ENCODE measurements at regions of chr19 and their contacts with region 1.

Region 1: DNA sequence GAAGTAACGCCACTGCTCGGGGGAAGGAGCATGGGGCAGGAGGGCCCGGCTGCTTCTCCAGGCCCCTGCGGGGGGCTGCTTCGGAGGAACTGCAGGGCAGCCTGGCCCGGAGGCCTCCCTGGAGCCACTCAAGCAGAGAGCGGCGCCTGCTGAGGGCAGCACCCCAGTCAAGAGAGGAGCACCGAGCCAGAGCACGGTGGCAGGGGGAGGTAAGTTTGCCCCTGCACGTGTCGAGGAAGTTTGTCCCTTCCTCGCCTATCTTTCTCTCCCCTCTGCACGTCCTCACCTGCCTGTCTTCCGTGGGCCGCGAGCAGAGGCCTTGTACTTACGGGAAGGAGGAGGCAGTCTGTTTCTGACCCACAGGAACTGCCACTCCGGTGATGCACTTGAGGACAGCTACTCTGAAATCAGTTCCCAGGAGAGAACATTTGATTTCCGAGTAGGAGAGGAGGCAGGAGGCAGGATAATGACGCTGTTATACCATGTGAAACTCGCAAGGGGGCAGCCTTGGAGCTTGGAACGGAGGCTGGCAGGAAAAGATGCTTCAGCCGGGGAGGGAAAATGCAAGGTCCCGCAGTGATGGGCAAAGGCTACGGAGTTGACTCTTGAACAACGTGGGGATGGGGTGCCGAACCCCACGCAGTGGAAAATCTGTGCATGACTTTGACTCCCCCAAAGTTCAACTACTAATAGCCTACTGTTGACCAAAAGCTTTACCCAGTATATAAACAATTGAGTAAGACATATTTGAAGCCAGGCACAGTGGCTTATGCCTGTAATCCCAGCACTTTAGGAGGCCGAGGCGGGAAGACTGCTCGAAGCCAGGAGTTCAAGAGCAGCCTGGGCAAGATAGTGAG is 5.0 kb downstream of the FFAR1 start:
- DNase-seq: peak; percentile 73
- ATAC-seq: peak; percentile 54
- H3K4me3 ChIP-seq: no peak overlapping the region
- H3K27ac ChIP-seq: no peak overlapping the region; the same call in 1 of the 2 replicates
- H3K4me1 ChIP-seq: peaks cover 44% of the 10 kb centered on the region
- H3K27me3 ChIP-seq: no peaks in the 10 kb centered on the region
- CTCF ChIP-seq: peak; percentile 82 to 95 (median 86); a peak in 5 of 6 replicates
- EP300 ChIP-seq: no peak
- POLR2A ChIP-seq: peak; percentile 33; the same call in 1 of the 2 replicates
- RAD21 ChIP-seq: peak; percentile 100

Region 2: GRCh38 chr19:35318650-35319448 is 33.8 kb before region 1 on chr19:
- CTCF ChIA-PET with region 1: interaction called, 10 read pairs
- POLR2A ChIA-PET with region 1: interaction called, 30 read pairs
- RAD21 ChIA-PET with region 1: interaction called, 15 read pairs
- SMC1A ChIA-PET with region 1: interaction called, 19 read pairs
- in situ Hi-C with region 1: no loop called
- intact Hi-C with region 1: no loop called
- DNase-seq: no peak
- ATAC-seq: peak; percentile 18; the same call in 1 of the 3 replicates
- H3K4me3 ChIP-seq: no peak overlapping the region
- H3K27ac ChIP-seq: no peak overlapping the region
- H3K4me1 ChIP-seq: peaks cover 27% of the 10 kb centered on the region
- H3K27me3 ChIP-seq: no peaks in the 10 kb centered on the region
- CTCF ChIP-seq: no peak
- EP300 ChIP-seq: no peak
- POLR2A ChIP-seq: no peak
- RAD21 ChIP-seq: no peak

Region 3: DNA sequence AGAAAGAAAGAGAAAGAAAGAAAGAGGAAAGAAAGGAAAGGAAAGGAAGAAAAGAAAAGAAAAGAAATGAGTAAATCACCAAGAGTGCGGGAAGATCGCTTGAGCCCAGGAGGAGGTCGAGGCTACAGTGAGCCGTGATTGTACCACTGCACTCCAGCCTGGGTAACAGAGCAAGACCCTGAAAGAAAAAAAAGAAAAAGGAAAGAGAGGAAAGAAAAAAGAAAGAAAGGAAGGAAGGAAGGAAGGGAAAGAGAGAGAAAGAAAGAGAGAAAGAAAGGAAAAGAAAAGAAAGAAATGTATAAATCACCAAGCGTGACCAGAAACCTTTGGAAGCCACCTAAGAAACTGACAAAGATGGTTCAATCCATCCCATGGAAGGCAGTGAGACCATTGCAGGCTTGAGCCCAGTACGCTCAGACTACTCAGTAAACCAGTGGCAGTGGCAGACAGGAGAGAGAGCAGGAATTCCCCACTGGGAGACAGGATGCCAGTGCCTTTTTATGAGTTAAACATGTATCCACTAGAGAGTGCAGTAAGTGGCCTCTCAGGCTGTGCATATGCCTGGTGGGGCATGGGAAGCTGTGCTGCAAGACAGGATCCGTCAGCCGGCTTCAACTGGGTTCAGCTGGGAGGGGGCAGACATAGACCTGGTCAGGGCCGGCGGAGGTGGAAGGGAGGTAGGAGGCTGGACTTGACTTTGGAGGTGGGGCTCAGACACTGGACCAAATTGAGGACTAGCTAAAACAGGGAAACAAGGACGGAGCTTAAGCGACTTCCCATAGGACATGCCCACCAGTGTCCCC is 23.0 kb after region 1 on chr19:
- CTCF ChIA-PET with region 1: interaction called, 22 read pairs
- POLR2A ChIA-PET with region 1: interaction called, 15 read pairs
- RAD21 ChIA-PET with region 1: interaction called, 47 read pairs
- SMC1A ChIA-PET with region 1: interaction called, 74 read pairs
- in situ Hi-C with region 1: no loop called
- intact Hi-C with region 1: no loop called
- DNase-seq: no peak
- ATAC-seq: peak; percentile 36; the same call in 2 of the 3 replicates
- H3K4me3 ChIP-seq: no peak overlapping the region
- H3K27ac ChIP-seq: peak overlapping the region; percentile 51; the same call in 1 of the 2 replicates
- H3K4me1 ChIP-seq: peaks cover 31% of the 10 kb centered on the region
- H3K27me3 ChIP-seq: no peaks in the 10 kb centered on the region
- CTCF ChIP-seq: no peak
- EP300 ChIP-seq: no peak
- POLR2A ChIP-seq: no peak
- RAD21 ChIP-seq: no peak

Region 4: GRCh38 chr19:35449053-35449687 is 96.5 kb after region 1 on chr19:
- CTCF ChIA-PET with region 1: interaction called, 5 read pairs
- POLR2A ChIA-PET with region 1: interaction called, 16 read pairs
- RAD21 ChIA-PET with region 1: interaction called, 5 read pairs
- SMC1A ChIA-PET with region 1: interaction called, 8 read pairs
- in situ Hi-C with region 1: no loop called
- intact Hi-C with region 1: no loop called
- DNase-seq: no peak
- ATAC-seq: no peak
- H3K4me3 ChIP-seq: 0 out of 2 replicates have a peak overlapping the region, but pooled peaks have one; percentile 4
- H3K27ac ChIP-seq: no peak overlapping the region
- H3K4me1 ChIP-seq: peaks cover 56% of the 10 kb centered on the region
- H3K27me3 ChIP-seq: no peaks in the 10 kb centered on the region
- CTCF ChIP-seq: no peak
- EP300 ChIP-seq: no peak
- POLR2A ChIP-seq: no peak
- RAD21 ChIP-seq: no peak

Region 5: GRCh38 chr19:35468637-35469036 is 116.0 kb after region 1 on chr19:
- CTCF ChIA-PET with region 1: interaction called, 168 read pairs
- POLR2A ChIA-PET with region 1: interaction called, 35 read pairs
- RAD21 ChIA-PET with region 1: interaction called, 143 read pairs
- SMC1A ChIA-PET with region 1: interaction called, 134 read pairs
- in situ Hi-C with region 1: loop called (anchors 5 kb)
- intact Hi-C with region 1: loop called (anchors 1 kb)
- DNase-seq: peak; percentile 82
- ATAC-seq: peak; percentile 100
- H3K4me3 ChIP-seq: no peak overlapping the region
- H3K27ac ChIP-seq: 0 out of 2 replicates have a peak overlapping the region, but pooled peaks have one; percentile 6
- H3K4me1 ChIP-seq: peaks cover 9% of the 10 kb centered on the region
- H3K27me3 ChIP-seq: no peaks in the 10 kb centered on the region
- CTCF ChIP-seq: peak; percentile 85 to 96 (median 93); a peak in 5 of 6 replicates
- EP300 ChIP-seq: peak in 1 of 2 experiments; percentile 65; a peak in 2 of 4 replicates
- POLR2A ChIP-seq: no peak
- RAD21 ChIP-seq: peak; percentile 99

Region 6: DNA sequence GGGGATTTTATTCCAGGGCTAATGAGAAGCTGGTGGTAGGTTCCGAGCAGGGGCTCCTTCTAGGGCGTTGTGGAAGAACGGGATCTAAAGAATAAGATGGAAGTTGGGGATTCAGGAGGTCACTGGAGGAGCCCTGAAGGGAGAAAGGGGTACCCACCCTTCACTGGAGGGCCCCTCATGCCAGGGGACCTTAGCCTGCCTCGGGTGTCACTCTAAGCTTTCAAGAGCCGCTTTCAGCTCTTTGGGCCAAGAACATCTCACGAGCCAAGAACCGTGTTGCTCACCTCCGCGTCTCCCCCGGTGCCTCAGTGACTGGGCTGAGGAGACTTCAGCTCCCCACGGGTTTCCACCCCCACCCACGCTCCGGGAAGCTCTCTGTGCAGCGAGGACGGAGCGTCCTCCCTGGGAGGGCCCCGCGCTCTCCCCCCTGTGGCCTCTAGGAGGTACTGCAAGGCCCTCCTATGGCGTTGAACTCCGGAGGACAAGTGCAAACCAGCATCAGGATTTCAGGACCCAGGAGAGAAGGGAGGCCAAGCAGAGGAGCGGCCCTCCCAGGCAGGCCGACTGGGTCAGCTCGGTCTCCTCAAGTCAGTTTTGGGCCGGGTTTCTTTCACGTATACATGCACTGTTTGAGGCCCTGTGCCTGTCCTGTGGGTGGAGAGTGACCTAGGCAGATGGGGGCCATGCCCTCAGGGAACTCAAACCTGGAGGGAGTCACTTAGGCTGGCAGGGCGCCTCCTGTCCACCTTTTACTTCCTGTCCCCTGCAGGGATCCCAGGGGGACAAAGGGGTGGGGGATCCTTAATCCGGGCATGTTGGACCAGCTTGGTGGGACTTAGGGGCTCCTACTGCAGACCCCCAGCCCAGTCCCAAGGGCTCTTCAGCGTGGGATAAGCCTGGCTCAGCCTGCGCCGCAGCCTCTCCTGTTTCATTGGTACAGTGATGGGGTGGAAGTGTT is 142.7 kb after region 1 on chr19:
- CTCF ChIA-PET with region 1: interaction called, 111 read pairs
- POLR2A ChIA-PET with region 1: interaction called, 13 read pairs
- RAD21 ChIA-PET with region 1: interaction called, 41 read pairs
- SMC1A ChIA-PET with region 1: interaction called, 44 read pairs
- in situ Hi-C with region 1: no loop called
- intact Hi-C with region 1: loop called (anchors 1 kb)
- DNase-seq: no peak
- ATAC-seq: peak; percentile 98
- H3K4me3 ChIP-seq: no peak overlapping the region
- H3K27ac ChIP-seq: no peak overlapping the region
- H3K4me1 ChIP-seq: peaks cover 9% of the 10 kb centered on the region
- H3K27me3 ChIP-seq: peaks cover 0 to 2% of the 10 kb centered on the region in 2 experiments; a peak in 1 of 4 replicates
- CTCF ChIP-seq: peak; percentile 96 to 100 (median 98)
- EP300 ChIP-seq: no peak
- POLR2A ChIP-seq: no peak
- RAD21 ChIP-seq: peak; percentile 88

Region 7: GRCh38 chr19:35528218-35529038 is 175.8 kb after region 1 on chr19 and contains the start of gene SBSN:
- CTCF ChIA-PET with region 1: no interaction called
- POLR2A ChIA-PET with region 1: no interaction called
- RAD21 ChIA-PET with region 1: no interaction called
- SMC1A ChIA-PET with region 1: no interaction called
- in situ Hi-C with region 1: no loop called
- intact Hi-C with region 1: no loop called
- DNase-seq: no peak
- ATAC-seq: no peak
- H3K4me3 ChIP-seq: no peak within 1 kb of the TSS
- H3K27ac ChIP-seq: no peak within 1 kb of the TSS
- H3K4me1 ChIP-seq: peaks cover 2% of the 10 kb centered on the region; the same call in 1 of the 2 replicates
- H3K27me3 ChIP-seq: peaks cover 0 to 13% of the 10 kb centered on the region in 2 experiments; a peak in 3 of 4 replicates
- CTCF ChIP-seq: no peak
- EP300 ChIP-seq: no peak
- POLR2A ChIP-seq: no peak
- RAD21 ChIP-seq: no peak
- polyA plus RNA-seq, gene SBSN: not detected

Measured in GM12878 (cell line).